Spleen (tissue), 13 donors: ENCODE measurements at regions of chr10 and their contacts with region 1.

Region 1: DNA sequence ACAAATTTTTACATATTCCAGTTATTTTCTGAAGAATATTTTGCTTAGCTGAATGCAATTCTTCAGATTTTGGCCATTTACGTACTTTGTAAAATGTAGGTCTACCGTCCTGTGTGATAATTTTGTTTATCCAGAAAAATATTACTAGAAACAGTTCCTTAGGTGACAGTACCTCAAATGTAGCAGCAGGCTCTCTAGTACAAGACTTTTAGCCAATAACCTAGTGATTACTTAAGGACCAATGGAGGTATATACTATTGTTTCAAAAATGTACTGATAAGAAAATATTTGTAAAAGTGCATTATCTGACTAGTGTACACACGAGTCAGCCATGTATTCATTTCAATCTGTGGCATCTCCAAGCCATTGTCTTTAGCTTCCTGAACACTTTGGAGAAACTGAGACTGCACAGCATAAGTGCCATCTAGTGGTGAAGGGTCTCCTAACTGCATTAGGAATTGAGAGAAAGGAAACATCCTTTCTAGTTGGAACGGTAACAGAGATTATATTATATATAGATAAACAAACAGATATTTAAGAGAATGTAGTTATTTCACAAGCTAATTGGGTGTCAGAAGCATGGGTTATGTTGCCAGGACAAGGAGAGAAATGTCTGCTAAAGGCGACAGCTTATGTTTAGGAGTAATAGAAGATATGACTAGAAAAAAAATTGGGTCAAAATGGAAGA is 23.7 kb downstream of the RTKN2 start:
- DNase-seq: no peak
- H3K4me3 ChIP-seq: peak overlapping the region in 2 of 8 donors; percentile 26 to 50
- H3K27ac ChIP-seq: peak overlapping the region in 6 of 8 donors; percentile 16 to 87 (median 83)
- H3K4me1 ChIP-seq: peaks cover 0 to 55% (median 33%) of the 10 kb centered on the region in 6 donors
- H3K27me3 ChIP-seq: no peaks in the 10 kb centered on the region
- CTCF ChIP-seq: peak; percentile 71 to 91 (median 82)
- POLR2A ChIP-seq: no peak

Region 2: GRCh38 chr10:61135276-61135721 is 1109.6 kb before region 1 on chr10:
- intact Hi-C with region 1: no loop called
- DNase-seq: no peak
- H3K4me3 ChIP-seq: no peak overlapping the region
- H3K27ac ChIP-seq: peak overlapping the region in 1 of 8 donors; percentile 32
- H3K4me1 ChIP-seq: peaks cover 0 to 7% (median 0%) of the 10 kb centered on the region in 6 donors
- H3K27me3 ChIP-seq: no peaks in the 10 kb centered on the region
- CTCF ChIP-seq: no peak
- POLR2A ChIP-seq: no peak

Region 3: DNA sequence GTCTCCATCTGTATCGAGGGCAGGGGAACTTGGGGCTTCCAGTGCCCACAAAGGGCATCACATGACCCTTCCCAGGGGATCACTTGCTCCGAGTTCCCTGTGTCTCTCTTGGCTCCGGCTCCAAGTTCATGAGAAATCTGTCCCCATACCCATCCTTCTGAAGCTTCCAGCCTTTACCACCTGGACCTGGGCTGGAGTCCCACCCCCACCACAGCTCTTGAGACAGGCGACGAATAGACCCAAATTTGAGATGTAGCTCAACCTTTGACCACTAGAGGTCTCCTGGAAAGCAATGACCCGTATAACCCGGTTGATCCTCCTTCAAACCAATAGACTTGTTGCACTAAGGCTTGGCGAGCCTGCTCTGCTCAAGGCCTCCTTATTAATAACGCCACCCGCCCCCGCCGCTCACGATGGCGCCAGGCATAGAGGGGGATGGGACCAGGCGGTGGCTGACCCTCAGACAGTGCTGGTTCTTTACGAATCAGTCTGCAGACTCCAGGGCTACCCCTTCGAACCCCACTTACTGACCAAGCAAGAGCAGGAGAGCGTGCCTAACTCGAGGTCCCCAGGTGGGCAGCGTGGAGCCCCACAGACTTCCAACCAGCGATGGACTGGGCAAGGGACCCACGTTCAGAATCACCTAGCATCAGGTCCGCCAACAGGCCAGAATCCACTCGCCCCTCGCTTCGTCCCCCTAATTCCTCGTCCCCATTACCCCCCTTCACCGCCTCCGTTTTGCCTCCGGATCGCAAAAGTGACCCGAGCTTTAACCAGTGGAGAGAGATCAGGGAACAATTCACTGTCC is 347.9 kb before region 1 on chr10:
- intact Hi-C with region 1: loop called (anchors 10 kb)
- DNase-seq: peak; percentile 91
- H3K4me3 ChIP-seq: peak overlapping the region in 7 of 8 donors; percentile 3 to 64 (median 26)
- H3K27ac ChIP-seq: peak overlapping the region in 6 of 8 donors; percentile 67 to 98 (median 98)
- H3K4me1 ChIP-seq: peaks cover 18 to 46% (median 31%) of the 10 kb centered on the region in 6 donors
- H3K27me3 ChIP-seq: no peaks in the 10 kb centered on the region
- CTCF ChIP-seq: peak; percentile 35 to 87 (median 76)
- POLR2A ChIP-seq: peak in 1 of 3 donors; percentile 9

Region 4: DNA sequence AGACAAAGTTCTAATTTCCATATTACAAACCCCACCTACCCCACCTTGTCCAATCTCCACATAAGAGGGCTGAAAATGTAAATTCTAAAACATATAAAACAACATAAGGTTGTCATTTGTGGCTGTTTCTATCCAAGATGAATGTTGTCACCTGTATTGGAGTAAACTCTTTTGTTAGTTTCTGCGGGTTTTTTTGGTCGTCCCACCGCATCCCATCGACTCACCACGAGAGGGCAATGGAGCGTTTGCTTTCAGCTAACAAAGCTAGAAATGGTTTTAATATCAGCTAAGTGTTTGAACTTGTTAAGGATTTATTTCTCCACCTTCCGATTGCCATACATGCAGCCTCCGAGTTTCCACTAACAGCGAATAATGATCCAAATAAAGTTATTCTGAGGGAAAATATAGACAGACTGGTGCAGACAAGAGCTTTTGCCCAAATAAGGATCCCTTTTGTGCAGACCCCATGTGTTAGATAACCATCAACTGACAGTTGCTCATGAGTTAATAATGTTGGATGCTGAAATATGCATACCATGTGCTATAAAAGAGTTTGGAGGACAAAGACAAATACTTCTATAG is 206.2 kb before region 1 on chr10:
- intact Hi-C with region 1: loop called (anchors 5 kb)
- DNase-seq: peak; percentile 86
- H3K4me3 ChIP-seq: peak overlapping the region in 1 of 8 donors; percentile 19
- H3K27ac ChIP-seq: peak overlapping the region in 7 of 8 donors; percentile 55 to 74 (median 66)
- H3K4me1 ChIP-seq: peaks cover 36 to 99% (median 68%) of the 10 kb centered on the region in 6 donors
- H3K27me3 ChIP-seq: no peaks in the 10 kb centered on the region
- CTCF ChIP-seq: peak; percentile 62 to 82 (median 78)
- POLR2A ChIP-seq: no peak

Region 5: GRCh38 chr10:62384057-62384446 is 139.1 kb after region 1 on chr10:
- intact Hi-C with region 1: no loop called
- DNase-seq: no peak
- H3K4me3 ChIP-seq: no peak overlapping the region
- H3K27ac ChIP-seq: peak overlapping the region in 5 of 8 donors; percentile 6 to 48 (median 12)
- H3K4me1 ChIP-seq: peaks cover 0 to 15% (median 0%) of the 10 kb centered on the region in 6 donors
- H3K27me3 ChIP-seq: no peaks in the 10 kb centered on the region
- CTCF ChIP-seq: no peak
- POLR2A ChIP-seq: no peak